ENCODE measurements at regions of chr9 and their contacts with region 1.

Region 1: DNA sequence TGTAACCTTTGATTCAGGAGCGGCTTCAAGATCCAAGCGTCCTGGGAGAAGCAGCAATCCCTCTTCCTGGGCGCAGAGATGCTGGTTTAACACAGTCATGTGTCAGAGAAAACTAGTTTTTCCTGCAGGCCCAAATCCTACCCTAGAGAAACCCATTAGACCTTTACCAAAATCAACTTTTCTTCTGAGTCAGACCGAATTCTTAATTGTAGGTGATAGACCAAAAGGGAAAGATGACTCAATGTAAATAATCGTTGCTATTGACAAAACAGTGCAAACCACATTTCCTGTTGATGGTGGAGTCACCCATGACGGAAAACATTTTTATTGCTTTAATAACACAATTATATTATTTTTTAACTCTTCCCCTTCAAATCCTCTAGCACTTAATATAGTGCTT is 40.1 kb downstream of the SLC1A1 start:
- DNase-seq: peak; percentile 93
- ATAC-seq: peak; percentile 88
- H3K4me3 ChIP-seq: 0 out of 2 replicates have a peak overlapping the region, but pooled peaks have one; percentile 48
- H3K27ac ChIP-seq: peak overlapping the region; percentile 98
- H3K4me1 ChIP-seq: peaks cover 26% of the 10 kb centered on the region
- H3K27me3 ChIP-seq: no peaks in the 10 kb centered on the region
- CTCF ChIP-seq: no peak

Region 2: GRCh38 chr9:4489919-4490704 is 40.3 kb before region 1 on chr9 and contains the start of gene SLC1A1:
- CTCF ChIA-PET with region 1: interaction called, 3 read pairs
- POLR2A ChIA-PET with region 1: interaction called, 3 read pairs
- intact Hi-C with region 1: loop called (anchors 1 kb)
- DNase-seq: peak; percentile 63
- ATAC-seq: peak; percentile 81
- H3K4me3 ChIP-seq: peak within 1 kb of the TSS; percentile 85
- H3K27ac ChIP-seq: 0 out of 2 replicates have a peak within 1 kb of the TSS, but pooled peaks have one; percentile 8
- H3K4me1 ChIP-seq: peaks cover 10% of the 10 kb centered on the region; the same call in 1 of the 2 replicates
- H3K27me3 ChIP-seq: no peaks in the 10 kb centered on the region
- CTCF ChIP-seq: no peak
- total RNA-seq, gene SLC1A1: 3.2 and 4.8 TPM in 2 replicates

Region 3: DNA sequence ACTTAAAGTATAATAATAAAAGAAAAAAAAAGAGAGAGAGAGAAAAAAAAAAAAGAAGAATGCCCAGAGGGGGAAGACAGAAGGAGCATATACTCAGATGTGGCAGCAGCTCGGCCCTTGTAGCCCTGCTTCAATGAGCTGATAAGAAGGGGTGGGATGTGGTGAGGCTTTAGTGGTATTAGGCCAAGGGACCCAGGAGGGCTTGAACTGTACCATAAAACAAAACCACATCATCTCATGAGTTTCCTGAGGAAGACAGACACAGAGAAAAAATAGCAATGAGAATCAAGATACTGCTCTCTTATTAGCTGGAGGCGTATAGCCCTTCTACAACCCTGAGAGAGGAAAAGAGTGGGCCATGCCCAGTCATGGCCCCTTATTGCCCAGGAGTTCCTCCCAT is 32.7 kb after region 1 on chr9:
- CTCF ChIA-PET with region 1: no interaction called
- POLR2A ChIA-PET with region 1: no interaction called
- intact Hi-C with region 1: no loop called
- DNase-seq: no peak
- ATAC-seq: no peak
- H3K4me3 ChIP-seq: no peak overlapping the region
- H3K27ac ChIP-seq: no peak overlapping the region
- H3K4me1 ChIP-seq: no peaks in the 10 kb centered on the region
- H3K27me3 ChIP-seq: no peaks in the 10 kb centered on the region
- CTCF ChIP-seq: no peak